ENCODE measurements at regions of chr14 and their contacts with region 1.

Region 1: DNA sequence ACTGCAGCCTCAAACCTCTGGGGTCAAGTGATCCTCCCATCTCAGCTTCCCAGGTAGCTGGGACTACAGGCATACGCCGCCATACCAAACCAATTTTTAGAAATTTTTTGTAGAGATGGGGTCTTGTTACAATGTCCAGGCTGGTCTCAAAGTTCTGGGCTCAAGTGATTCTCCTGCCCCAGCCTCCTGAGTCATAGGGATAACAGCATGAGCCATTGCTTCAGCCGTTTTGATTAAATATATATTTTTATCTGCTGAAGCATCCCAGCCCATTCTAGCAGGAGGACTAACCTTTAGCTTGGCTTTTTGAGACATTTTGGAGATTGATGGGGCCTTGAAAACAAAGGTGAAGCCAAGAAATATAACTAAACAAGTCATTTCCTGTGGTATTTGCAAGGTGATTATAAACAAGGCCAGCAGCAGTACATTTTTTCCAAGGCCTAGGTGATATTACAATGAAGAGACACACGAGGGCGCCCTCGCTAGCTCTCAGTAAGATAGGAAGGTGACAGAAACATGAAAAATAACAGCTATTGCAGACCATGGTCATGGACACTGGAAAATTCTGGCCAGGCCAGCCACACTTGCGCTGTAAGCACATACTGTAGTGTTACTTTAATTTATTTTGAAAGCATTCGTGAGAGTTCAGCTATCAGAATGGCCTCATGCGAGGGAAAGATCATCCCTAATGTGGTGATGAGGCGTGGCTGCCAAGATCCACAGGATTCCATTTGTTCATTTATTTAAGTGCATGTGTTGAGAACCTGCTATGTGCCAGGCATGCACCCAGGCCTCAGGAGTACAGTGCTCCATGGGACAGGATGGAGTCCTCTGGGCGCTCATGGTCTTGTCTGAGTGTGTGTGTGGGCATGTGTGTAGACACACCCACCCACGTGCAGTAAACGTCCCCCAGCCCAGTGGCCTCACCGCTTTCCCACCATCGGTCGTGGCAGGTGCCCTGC is 63.5 kb downstream of the DGLUCY start:
- DNase-seq: peak; percentile 71
- H3K4me3 ChIP-seq: no peak overlapping the region
- H3K27ac ChIP-seq: no peak overlapping the region
- H3K4me1 ChIP-seq: peaks cover 12% of the 10 kb centered on the region
- H3K27me3 ChIP-seq: no peaks in the 10 kb centered on the region
- CTCF ChIP-seq: peak; percentile 89

Region 2: DNA sequence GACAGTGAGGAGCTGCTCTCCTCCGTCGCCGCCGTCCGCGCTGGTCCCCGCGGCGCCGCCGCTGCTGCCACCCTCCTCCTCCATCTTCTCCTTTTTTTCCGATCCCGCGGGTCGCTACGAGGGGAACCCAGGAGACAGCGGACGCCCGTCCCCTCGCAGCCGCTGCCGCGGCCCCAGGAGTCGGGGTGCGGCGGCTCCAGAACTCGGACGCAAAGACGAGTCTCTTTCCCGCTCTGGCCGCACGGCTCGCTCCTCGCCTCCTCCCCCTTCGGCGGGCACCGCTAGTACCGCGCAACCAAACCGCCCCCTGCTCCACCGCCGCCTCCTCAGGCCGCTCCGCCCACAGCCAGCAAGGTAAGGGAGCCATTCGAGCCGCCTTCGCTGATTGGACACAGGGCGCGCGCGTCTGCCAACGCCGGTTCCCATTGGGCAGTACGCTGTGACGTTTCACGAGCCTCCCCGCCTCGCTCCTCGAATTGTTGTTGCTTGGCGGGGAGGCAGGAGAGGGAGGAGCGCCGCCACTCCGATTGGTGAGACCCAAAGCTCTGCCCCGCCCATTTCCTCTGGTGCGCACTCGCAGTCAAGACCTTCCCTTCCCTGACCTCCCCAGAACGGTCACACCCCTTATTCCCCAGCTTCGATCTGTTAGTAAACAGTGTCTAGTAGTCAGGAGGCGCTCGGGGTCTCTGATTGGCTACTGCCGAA is 116.9 kb before region 1 on chr14 and contains the start of gene RPS6KA5:
- CTCF ChIA-PET with region 1: no interaction called
- POLR2A ChIA-PET with region 1: no interaction called
- intact Hi-C with region 1: loop called (anchors 5 kb)
- DNase-seq: peak; percentile 100
- H3K4me3 ChIP-seq: peak within 1 kb of the TSS; percentile 79
- H3K27ac ChIP-seq: peak within 1 kb of the TSS; percentile 78
- H3K4me1 ChIP-seq: peaks cover 18% of the 10 kb centered on the region
- H3K27me3 ChIP-seq: no peaks in the 10 kb centered on the region
- CTCF ChIP-seq: no peak; the same call in 1 of the 2 replicates
- total RNA-seq, gene RPS6KA5: 7.6 and 7.9 TPM in 2 replicates

Region 3: DNA sequence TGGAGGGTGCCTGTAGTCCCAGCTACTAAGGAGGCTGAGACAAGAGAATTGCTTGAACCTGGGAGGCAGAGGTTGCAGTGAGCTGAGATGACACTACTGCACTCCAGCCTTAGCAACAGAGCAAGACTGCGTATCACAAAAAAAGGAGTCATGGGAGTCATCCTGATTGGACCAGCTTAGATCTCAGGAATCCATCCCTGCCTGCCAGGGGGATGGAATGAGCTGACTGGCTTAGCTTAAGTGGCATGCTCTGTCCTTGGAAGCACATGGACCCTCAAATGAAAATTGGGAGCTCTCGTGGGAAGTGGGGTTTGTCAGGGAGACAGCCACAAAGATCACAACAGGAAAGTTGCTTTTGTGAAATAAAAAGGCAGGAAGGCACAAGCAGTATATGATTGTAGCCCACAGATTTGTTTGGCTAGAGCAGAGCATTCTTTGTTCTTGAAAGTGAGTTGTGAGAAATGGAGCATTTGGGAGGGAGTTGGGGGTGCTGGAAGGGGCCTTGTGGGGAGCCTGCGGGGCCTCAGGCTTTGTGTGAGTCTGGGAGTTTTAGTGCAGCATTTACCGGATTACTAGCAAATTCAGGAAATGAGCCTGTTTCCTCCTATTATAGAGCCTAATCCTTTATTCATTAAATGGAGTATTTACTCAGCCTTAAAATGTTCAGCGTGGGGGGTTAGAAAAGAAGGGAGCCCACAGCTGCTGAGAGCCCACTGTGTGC is 32.8 kb before region 1 on chr14:
- CTCF ChIA-PET with region 1: interaction called, 12 read pairs
- POLR2A ChIA-PET with region 1: interaction called, 3 read pairs
- intact Hi-C with region 1: no loop called
- DNase-seq: peak; percentile 98
- H3K4me3 ChIP-seq: no peak overlapping the region
- H3K27ac ChIP-seq: peak overlapping the region; percentile 89
- H3K4me1 ChIP-seq: peaks cover 80% of the 10 kb centered on the region
- H3K27me3 ChIP-seq: no peaks in the 10 kb centered on the region
- CTCF ChIP-seq: no peak

Region 4: GRCh38 chr14:91286530-91286937 is 109.2 kb after region 1 on chr14:
- CTCF ChIA-PET with region 1: interaction called, 6 read pairs
- POLR2A ChIA-PET with region 1: no interaction called
- intact Hi-C with region 1: loop called (anchors 1 kb)
- DNase-seq: peak; percentile 87
- H3K4me3 ChIP-seq: no peak overlapping the region
- H3K27ac ChIP-seq: no peak overlapping the region
- H3K4me1 ChIP-seq: peaks cover 35% of the 10 kb centered on the region
- H3K27me3 ChIP-seq: no peaks in the 10 kb centered on the region
- CTCF ChIP-seq: peak; percentile 95

Region 5: GRCh38 chr14:91893007-91893406 is 715.7 kb after region 1 on chr14:
- CTCF ChIA-PET with region 1: no interaction called
- POLR2A ChIA-PET with region 1: no interaction called
- intact Hi-C with region 1: no loop called
- DNase-seq: peak; percentile 39
- H3K4me3 ChIP-seq: no peak overlapping the region
- H3K27ac ChIP-seq: no peak overlapping the region
- H3K4me1 ChIP-seq: no peaks in the 10 kb centered on the region
- H3K27me3 ChIP-seq: no peaks in the 10 kb centered on the region
- CTCF ChIP-seq: peak; percentile 73

Region 6: GRCh38 chr14:92108345-92109254 is 931.2 kb after region 1 on chr14:
- CTCF ChIA-PET with region 1: no interaction called
- POLR2A ChIA-PET with region 1: no interaction called
- intact Hi-C with region 1: no loop called
- DNase-seq: peak; percentile 19
- H3K4me3 ChIP-seq: no peak overlapping the region
- H3K27ac ChIP-seq: no peak overlapping the region
- H3K4me1 ChIP-seq: peaks cover 5% of the 10 kb centered on the region
- H3K27me3 ChIP-seq: no peaks in the 10 kb centered on the region
- CTCF ChIP-seq: no peak

Measured in A673 (cell line).